Upper lobe of right lung (tissue), 1 donor: ENCODE measurements at regions of chr1 and their contacts with region 1.

Region 1: DNA sequence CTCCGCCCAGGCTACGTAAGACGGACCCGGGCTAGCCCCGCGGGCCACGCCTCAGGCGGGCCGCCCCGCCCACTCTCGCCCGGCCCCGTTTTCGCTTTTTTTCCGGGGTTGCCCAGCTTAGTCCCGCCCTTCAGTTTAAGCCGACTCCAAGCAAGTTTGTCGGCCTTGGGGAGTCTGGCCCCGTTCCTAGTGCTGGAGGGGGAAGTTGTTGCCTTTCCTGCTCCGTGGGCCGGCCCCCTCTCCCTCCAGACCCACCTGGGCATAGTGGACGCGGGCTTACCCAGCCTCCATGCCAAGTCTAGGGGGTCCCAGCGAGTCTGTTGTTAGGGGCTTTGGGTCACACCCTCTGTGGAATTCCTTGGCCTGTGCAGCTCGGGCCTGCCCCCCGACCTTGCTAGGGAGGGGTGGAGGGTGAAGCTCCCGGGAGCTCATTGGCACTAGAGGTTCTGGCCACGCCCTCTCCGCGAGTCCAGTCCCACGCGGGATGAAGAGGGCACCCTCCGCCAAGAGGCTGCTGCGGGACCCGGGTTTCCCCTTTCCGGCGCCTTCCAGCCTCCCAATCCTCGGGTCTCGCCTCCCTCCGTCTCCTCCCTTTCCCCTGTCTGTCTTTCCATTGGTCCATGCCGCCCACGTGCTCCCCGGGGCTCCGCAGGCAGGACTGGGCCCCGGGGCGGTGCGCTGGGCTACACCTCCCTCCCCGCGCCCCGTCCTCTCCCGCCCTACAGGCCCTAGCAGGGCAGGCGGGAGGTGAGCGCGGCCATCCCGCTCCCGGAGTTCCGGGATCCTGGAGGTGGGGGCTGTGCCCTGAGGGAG is 3.3 kb downstream of the RUSC1 start:
- DNase-seq: peak; percentile 98
- ATAC-seq: peak; percentile 90
- H3K4me3 ChIP-seq: peak overlapping the region; percentile 76
- H3K27ac ChIP-seq: peak overlapping the region; percentile 92
- H3K4me1 ChIP-seq: peaks cover 36% of the 10 kb centered on the region
- H3K27me3 ChIP-seq: no peaks in the 10 kb centered on the region
- CTCF ChIP-seq: no peak

Region 2: DNA sequence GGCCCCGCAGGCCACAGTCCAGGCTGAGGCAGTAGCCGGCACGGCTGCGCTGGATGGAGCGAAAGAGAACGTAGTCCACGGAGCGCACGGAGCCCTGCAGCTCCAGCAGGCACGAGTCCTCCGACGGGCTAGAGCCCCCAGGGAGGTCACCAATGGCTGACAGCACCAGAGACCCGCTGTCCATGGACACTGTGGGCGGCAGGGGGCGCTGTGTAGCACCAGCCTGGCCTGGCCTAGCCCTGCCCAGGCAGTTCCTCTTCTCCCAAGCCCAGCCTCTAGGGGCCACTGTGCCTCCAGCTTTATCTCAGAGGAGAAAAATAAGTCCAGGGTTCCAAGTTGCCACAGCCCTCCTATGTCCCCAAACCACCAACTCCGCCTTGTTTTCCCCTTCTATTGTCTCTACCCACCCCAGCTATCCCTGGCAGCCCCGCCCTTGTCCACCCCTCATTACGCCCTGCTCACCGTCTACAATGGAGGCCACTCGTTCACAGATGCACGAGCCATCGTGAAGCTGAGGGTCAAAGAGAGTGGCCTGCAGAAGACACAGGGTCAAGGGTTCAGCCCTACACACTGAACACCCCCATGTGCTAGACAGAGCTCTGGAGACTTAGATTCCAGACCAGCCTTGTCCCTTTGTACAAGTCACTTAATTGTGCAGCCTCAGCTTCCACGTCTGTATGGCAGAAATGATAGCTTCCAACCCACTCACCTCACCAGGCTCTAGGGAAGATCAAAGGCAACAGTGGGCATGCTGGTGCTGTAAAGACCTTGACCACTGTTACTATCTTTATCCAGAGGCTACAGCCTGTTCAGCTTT is 73.2 kb before region 1 on chr1:
- intact Hi-C with region 1: loop called (anchors 10 kb)
- DNase-seq: peak; percentile 96
- ATAC-seq: peak; percentile 93
- H3K4me3 ChIP-seq: no peak overlapping the region
- H3K27ac ChIP-seq: no peak overlapping the region
- H3K4me1 ChIP-seq: peaks cover 19% of the 10 kb centered on the region
- H3K27me3 ChIP-seq: no peaks in the 10 kb centered on the region
- CTCF ChIP-seq: peak; percentile 100

Region 3: DNA sequence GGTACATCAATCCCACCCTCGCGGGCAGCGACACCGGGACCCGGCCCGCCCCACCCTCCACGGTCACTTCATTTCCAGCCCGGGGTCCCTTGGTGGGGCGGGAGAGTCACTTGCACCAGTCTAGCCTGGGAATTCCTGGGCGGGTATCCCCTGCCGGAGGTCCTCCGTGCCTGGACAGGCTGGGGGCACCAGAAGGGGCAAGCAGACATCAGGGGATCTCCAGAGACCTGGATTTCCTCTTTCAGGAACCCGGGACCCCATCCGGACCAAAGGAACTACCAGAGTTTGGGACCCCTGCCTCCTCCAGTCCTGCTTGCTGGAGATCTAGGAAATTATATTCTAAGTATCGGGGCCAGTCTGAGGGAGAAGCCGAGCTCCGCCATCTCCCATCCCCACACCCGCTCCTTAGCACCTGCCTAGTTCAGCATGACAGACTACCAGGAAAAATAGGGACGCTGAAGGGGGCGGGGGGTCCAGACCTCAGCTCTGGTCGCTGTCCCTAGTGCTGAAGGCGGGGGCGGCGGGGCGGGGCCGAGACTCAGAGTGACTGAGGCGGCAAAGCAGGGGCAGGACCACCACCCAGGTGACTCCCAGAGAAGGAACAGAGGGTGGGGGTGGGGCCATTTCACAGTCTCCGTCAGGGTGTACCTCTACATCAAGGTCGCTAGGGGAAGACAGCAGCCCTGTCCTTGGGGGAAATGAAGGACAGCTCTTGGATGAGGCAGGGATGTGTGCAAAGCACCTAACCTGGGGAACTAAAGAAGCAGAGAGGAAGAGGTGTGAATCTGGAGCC is 45.9 kb before region 1 on chr1:
- intact Hi-C with region 1: no loop called
- DNase-seq: peak; percentile 79
- ATAC-seq: peak; percentile 2
- H3K4me3 ChIP-seq: peak overlapping the region; percentile 79
- H3K27ac ChIP-seq: no peak overlapping the region
- H3K4me1 ChIP-seq: peaks cover 16% of the 10 kb centered on the region
- H3K27me3 ChIP-seq: no peaks in the 10 kb centered on the region
- CTCF ChIP-seq: peak; percentile 29